Caco-2 (cell line): ENCODE measurements at regions of chr3 and their contacts with region 1.

Region 1: GRCh38 chr3:158434412-158435038 is 136.5 kb upstream of the MLF1 start:
- DNase-seq: peak; percentile 64 to 69
- H3K4me3 ChIP-seq: no peak overlapping the region
- H3K4me3 Mint-ChIP-seq: no peak overlapping the region
- H3K27ac Mint-ChIP-seq: no peak overlapping the region
- H3K4me1 ChIP-seq: peaks cover 24% of the 10 kb centered on the region
- H3K4me1 Mint-ChIP-seq: no peaks in the 10 kb centered on the region
- H3K27me3 ChIP-seq: no peaks in the 10 kb centered on the region
- H3K27me3 Mint-ChIP-seq: no peaks in the 10 kb centered on the region
- CTCF ChIP-seq: peak; percentile 55 to 69

Region 2: DNA sequence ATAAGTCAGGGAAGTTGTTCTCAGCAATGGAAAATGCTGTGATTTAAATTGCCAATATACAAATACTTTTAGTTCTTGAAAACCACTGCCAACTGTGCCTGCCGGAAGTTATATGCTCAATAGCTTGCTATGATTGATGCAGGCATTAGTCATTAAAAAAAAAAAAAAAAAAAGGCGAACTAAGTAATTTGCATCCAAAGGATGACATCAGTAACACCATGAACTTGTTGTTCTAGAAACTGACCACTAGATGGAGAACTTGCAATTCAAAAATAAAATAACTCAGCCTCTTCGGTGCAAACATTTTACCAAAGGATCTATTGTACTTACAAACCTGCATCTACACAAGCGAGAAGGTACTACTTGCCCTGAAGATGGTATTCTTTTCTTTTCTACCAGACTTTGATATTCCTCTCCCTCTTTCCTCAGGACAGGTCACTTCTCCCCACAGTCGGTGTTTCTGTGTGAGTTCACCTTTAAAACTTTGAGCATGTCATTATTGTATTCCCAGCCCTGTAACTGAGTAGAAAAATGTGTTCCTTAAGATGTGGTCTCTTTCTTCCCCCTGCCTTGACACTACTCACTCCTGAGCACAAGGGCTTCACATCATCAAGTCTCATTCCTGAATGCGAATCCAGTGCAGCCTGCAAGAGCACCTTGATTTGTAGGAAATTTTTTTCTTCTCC is 816.3 kb before region 1 on chr3:
- CTCF ChIA-PET with region 1: no interaction called
- POLR2A ChIA-PET with region 1: no interaction called
- intact Hi-C with region 1: loop called (anchors 1 kb)
- DNase-seq: peak in 1 of 2 experiments; percentile 15
- H3K4me3 ChIP-seq: no peak overlapping the region
- H3K4me3 Mint-ChIP-seq: no peak overlapping the region
- H3K27ac Mint-ChIP-seq: no peak overlapping the region
- H3K4me1 ChIP-seq: no peaks in the 10 kb centered on the region
- H3K4me1 Mint-ChIP-seq: peaks cover 7% of the 10 kb centered on the region
- H3K27me3 ChIP-seq: no peaks in the 10 kb centered on the region; the same call in 1 of the 2 replicates
- H3K27me3 Mint-ChIP-seq: peaks cover 12% of the 10 kb centered on the region
- CTCF ChIP-seq: peak in 1 of 2 experiments; percentile 57

Region 3: GRCh38 chr3:157938154-157938779 is 496.3 kb before region 1 on chr3:
- CTCF ChIA-PET with region 1: no interaction called
- POLR2A ChIA-PET with region 1: no interaction called
- intact Hi-C with region 1: loop called (anchors 2 kb)
- DNase-seq: no peak
- H3K4me3 ChIP-seq: no peak overlapping the region
- H3K4me3 Mint-ChIP-seq: no peak overlapping the region
- H3K27ac Mint-ChIP-seq: no peak overlapping the region
- H3K4me1 ChIP-seq: peaks cover 24% of the 10 kb centered on the region
- H3K4me1 Mint-ChIP-seq: peaks cover 20% of the 10 kb centered on the region
- H3K27me3 ChIP-seq: no peaks in the 10 kb centered on the region
- H3K27me3 Mint-ChIP-seq: no peaks in the 10 kb centered on the region
- CTCF ChIP-seq: no peak

Region 4: DNA sequence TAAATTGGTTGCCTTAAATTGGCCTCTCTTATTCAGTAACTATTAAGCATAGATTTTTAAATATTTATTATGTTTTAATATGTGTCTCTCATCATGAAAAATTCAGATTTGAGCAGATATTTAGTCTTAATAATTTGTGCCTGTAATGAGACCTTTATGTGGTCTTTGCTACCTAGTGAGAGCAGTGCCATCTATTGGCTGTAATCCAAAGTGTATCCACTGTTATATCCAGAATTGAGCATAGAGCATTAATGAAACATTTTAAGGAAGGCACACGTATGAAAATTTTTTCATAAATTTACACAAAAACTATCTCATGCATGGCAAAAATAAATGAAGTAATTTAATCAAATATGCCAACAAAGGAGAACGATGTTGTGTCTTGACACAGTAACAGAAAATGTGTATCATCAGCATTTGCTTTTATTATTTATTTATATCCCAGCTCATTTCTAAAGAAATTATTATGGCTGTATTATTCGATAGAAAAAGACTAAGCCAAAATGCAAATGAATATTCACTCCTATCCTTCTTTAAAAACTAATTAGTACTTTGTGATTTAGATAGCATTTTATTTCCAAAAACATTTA is 121.1 kb before region 1 on chr3:
- CTCF ChIA-PET with region 1: no interaction called
- POLR2A ChIA-PET with region 1: no interaction called
- intact Hi-C with region 1: loop called (anchors 2 kb)
- DNase-seq: peak in 1 of 2 experiments; percentile 22
- H3K4me3 ChIP-seq: no peak overlapping the region
- H3K4me3 Mint-ChIP-seq: no peak overlapping the region
- H3K27ac Mint-ChIP-seq: no peak overlapping the region
- H3K4me1 ChIP-seq: peaks cover 14% of the 10 kb centered on the region
- H3K4me1 Mint-ChIP-seq: peaks cover 11% of the 10 kb centered on the region
- H3K27me3 ChIP-seq: no peaks in the 10 kb centered on the region
- H3K27me3 Mint-ChIP-seq: no peaks in the 10 kb centered on the region
- CTCF ChIP-seq: peak; percentile 47 to 61

Region 5: GRCh38 chr3:158483701-158484235 is 49.2 kb after region 1 on chr3:
- CTCF ChIA-PET with region 1: no interaction called
- POLR2A ChIA-PET with region 1: no interaction called
- intact Hi-C with region 1: no loop called
- DNase-seq: no peak
- H3K4me3 ChIP-seq: no peak overlapping the region
- H3K4me3 Mint-ChIP-seq: no peak overlapping the region
- H3K27ac Mint-ChIP-seq: no peak overlapping the region
- H3K4me1 ChIP-seq: no peaks in the 10 kb centered on the region
- H3K4me1 Mint-ChIP-seq: no peaks in the 10 kb centered on the region
- H3K27me3 ChIP-seq: no peaks in the 10 kb centered on the region
- H3K27me3 Mint-ChIP-seq: no peaks in the 10 kb centered on the region
- CTCF ChIP-seq: no peak

Region 6: DNA sequence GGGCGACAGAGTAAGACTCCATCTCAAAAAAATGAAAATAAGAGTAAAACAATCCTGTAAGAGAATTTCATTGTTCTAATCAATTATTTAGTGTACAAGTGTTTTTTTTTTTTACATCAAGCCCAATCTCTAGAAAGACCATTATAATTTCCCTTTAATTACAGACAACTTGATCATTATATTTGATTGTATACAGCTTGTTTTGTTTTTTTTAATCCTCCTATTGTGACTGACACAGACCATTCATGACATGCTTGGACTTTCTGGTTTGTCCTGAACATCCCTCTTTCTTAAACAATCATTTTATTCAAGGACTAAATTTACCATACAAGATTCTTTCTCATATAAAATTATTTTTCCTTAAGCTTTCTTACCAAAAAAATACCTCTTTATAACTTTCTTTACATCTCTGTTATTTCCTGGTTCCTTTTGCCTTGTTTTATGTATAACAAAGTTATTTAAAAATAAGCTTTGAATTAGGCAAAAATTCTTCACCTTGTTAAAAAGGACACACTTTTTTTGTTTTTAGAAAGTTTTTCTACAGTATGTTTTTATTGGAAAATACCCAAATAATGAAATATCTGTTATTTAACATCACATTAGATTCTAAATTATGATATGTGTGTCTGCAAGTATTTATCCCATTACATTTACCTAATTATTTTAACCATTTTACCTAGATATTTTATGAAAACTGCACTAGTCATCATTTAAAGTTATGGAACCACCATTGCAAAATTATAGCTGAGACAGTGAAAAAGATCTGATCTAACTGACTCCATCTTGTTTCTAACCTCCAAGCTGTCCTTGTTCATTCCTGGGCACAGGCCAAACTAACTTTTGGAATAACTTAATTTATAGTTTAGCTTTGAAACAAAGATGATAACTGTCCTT is 183.7 kb after region 1 on chr3:
- CTCF ChIA-PET with region 1: no interaction called
- POLR2A ChIA-PET with region 1: no interaction called
- intact Hi-C with region 1: no loop called
- DNase-seq: no peak
- H3K4me3 ChIP-seq: no peak overlapping the region
- H3K4me3 Mint-ChIP-seq: no peak overlapping the region
- H3K27ac Mint-ChIP-seq: no peak overlapping the region
- H3K4me1 ChIP-seq: no peaks in the 10 kb centered on the region
- H3K4me1 Mint-ChIP-seq: no peaks in the 10 kb centered on the region
- H3K27me3 ChIP-seq: no peaks in the 10 kb centered on the region
- H3K27me3 Mint-ChIP-seq: no peaks in the 10 kb centered on the region
- CTCF ChIP-seq: no peak

Region 7: DNA sequence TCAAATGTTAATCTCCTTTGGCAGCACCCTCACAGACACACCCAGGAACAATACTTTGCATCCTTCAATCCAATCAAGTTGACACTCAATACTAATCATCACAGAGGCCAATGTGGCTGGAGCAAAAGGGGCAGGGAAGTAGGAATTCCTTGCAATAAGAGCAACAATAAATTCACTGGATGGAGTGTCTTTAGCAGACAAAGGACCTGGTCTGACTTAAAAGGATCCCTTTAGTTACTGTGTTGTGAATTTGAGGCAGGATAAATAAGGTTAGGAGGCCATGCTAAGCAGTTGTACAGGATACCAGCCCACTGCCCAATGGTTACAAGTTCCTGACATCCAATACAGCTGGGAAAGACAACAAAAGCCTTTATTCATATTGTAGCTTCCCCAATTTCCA is 197.5 kb after region 1 on chr3:
- CTCF ChIA-PET with region 1: no interaction called
- POLR2A ChIA-PET with region 1: no interaction called
- intact Hi-C with region 1: no loop called
- DNase-seq: no peak
- H3K4me3 ChIP-seq: no peak overlapping the region
- H3K4me3 Mint-ChIP-seq: no peak overlapping the region
- H3K27ac Mint-ChIP-seq: no peak overlapping the region
- H3K4me1 ChIP-seq: no peaks in the 10 kb centered on the region
- H3K4me1 Mint-ChIP-seq: no peaks in the 10 kb centered on the region
- H3K27me3 ChIP-seq: no peaks in the 10 kb centered on the region
- H3K27me3 Mint-ChIP-seq: no peaks in the 10 kb centered on the region
- CTCF ChIP-seq: no peak